Left lung (tissue), 14 donors: ENCODE measurements at regions of chr12 and their contacts with region 1.

Region 1: GRCh38 chr12:122951979-122952892 is 14.0 kb downstream of the ABCB9 start:
- DNase-seq: peak in 3 of 4 donors; percentile 80 to 85 (median 80)
- ATAC-seq: peak; percentile 97
- H3K4me3 ChIP-seq: no peak overlapping the region
- H3K27ac ChIP-seq: no peak overlapping the region
- H3K4me1 ChIP-seq: peaks cover 0 to 8% of the 10 kb centered on the region in 2 donors
- H3K27me3 ChIP-seq: no peaks in the 10 kb centered on the region
- CTCF ChIP-seq: peak; percentile 78 to 91

Region 2: GRCh38 chr12:122793685-122794106 is 158.5 kb before region 1 on chr12:
- intact Hi-C with region 1: loop called in 1 of 2 experiments (anchors 5 kb)
- DNase-seq: peak in 2 of 4 donors; percentile 36 to 43
- ATAC-seq: peak; percentile 88
- H3K4me3 ChIP-seq: no peak overlapping the region
- H3K27ac ChIP-seq: no peak overlapping the region
- H3K4me1 ChIP-seq: peaks cover 0 to 5% of the 10 kb centered on the region in 2 donors
- H3K27me3 ChIP-seq: no peaks in the 10 kb centered on the region
- CTCF ChIP-seq: peak; percentile 58 to 61

Region 3: DNA sequence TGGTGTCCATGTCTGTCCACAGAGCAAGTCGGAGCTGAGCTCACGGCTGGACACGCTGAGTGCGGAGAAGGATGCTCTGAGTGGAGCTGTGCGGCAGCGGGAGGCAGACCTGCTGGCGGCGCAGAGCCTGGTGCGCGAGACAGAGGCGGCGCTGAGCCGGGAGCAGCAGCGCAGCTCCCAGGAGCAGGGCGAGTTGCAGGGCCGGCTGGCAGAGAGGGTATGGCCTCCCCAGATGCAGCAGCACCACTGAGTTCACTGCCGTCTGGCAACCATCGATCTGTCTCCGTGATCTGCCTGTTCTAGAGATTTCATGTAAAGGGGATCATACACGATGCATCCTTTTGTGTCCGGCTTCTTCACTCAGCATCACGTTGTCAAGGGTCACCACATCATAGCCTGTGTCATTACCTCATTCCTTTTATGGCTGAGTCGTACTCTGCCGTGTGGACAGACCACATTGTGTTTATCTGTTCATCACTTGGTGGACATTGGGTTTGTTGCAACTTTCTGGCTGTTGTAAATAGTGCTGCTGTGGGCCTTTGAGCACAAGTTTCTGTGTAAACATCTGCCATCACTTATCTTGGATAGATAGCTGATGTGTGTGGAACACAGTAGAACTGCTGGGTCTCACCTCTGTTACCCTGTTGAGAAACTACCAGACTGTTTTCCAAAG is 95.1 kb before region 1 on chr12:
- intact Hi-C with region 1: loop called (anchors 5 kb)
- DNase-seq: no peak
- ATAC-seq: no peak
- H3K4me3 ChIP-seq: no peak overlapping the region
- H3K27ac ChIP-seq: no peak overlapping the region
- H3K4me1 ChIP-seq: peaks cover 3 to 24% of the 10 kb centered on the region in 2 donors
- H3K27me3 ChIP-seq: no peaks in the 10 kb centered on the region
- CTCF ChIP-seq: no peak

Region 4: GRCh38 chr12:123024819-123025391 is 72.7 kb after region 1 on chr12:
- intact Hi-C with region 1: no loop called
- DNase-seq: no peak
- ATAC-seq: no peak
- H3K4me3 ChIP-seq: no peak overlapping the region
- H3K27ac ChIP-seq: no peak overlapping the region
- H3K4me1 ChIP-seq: peaks cover 0 to 3% of the 10 kb centered on the region in 2 donors
- H3K27me3 ChIP-seq: no peaks in the 10 kb centered on the region
- CTCF ChIP-seq: no peak

Region 5: DNA sequence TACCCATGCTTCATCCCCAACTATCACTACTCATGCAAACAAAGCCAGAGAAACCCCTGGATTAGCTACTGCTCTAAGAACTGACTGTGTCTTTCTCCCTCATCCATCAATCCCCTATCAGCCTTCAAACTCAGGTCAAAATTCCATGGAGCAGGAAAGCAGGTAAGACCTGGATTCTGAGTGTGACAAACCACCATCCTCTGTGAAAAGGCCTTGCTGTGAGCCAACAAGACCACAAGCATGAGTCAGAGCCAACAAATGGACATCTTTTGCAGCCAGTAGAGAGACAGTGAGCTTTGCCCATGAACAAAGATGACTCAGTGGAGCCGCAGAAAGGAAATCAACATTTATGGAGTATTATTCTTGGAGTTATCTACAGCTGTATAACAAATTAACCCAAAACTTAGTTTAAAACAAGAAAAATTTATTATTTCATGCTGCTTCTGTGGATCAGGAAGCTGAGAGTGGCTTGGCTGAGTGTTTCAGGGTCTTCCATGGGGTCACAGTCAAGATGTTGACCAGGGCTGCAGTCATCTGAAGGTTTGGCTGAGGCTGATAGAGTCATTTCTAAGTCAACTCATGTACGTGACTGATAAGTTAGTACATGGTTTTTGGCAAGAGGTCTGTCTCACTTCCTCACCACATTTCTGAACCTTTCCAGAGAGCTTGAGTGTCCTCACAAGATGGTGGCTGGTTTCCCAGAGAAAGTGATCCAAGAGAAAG is 137.6 kb after region 1 on chr12:
- intact Hi-C with region 1: no loop called
- DNase-seq: no peak
- ATAC-seq: peak; percentile 53
- H3K4me3 ChIP-seq: no peak overlapping the region
- H3K27ac ChIP-seq: peak overlapping the region in 1 of 2 donors; percentile 39
- H3K4me1 ChIP-seq: peaks cover under 1 to 53% of the 10 kb centered on the region in 2 donors
- H3K27me3 ChIP-seq: no peaks in the 10 kb centered on the region
- CTCF ChIP-seq: no peak

Region 6: GRCh38 chr12:123354600-123354999 is 402.4 kb after region 1 on chr12:
- intact Hi-C with region 1: no loop called
- DNase-seq: no peak
- ATAC-seq: no peak
- H3K4me3 ChIP-seq: no peak overlapping the region
- H3K27ac ChIP-seq: no peak overlapping the region
- H3K4me1 ChIP-seq: peaks cover 0 to 43% of the 10 kb centered on the region in 2 donors
- H3K27me3 ChIP-seq: no peaks in the 10 kb centered on the region
- CTCF ChIP-seq: no peak

Region 7: GRCh38 chr12:124208481-124208880 is 1256.2 kb after region 1 on chr12:
- intact Hi-C with region 1: no loop called
- DNase-seq: no peak
- ATAC-seq: no peak
- H3K4me3 ChIP-seq: no peak overlapping the region
- H3K27ac ChIP-seq: no peak overlapping the region
- H3K4me1 ChIP-seq: no peaks in the 10 kb centered on the region
- H3K27me3 ChIP-seq: no peaks in the 10 kb centered on the region
- CTCF ChIP-seq: no peak